ENCODE measurements at regions of chr1 and their contacts with region 1.

Region 1: GRCh38 chr1:157156058-157156541 is 17.9 kb upstream of the ETV3 start:
- DNase-seq: peak; percentile 81
- ATAC-seq: peak; percentile 86
- H3K4me3 Mint-ChIP-seq: no peak overlapping the region
- H3K27ac Mint-ChIP-seq: peak overlapping the region; percentile 33
- H3K4me1 Mint-ChIP-seq: peaks cover 23% of the 10 kb centered on the region
- H3K27me3 Mint-ChIP-seq: peaks cover 23% of the 10 kb centered on the region

Region 2: DNA sequence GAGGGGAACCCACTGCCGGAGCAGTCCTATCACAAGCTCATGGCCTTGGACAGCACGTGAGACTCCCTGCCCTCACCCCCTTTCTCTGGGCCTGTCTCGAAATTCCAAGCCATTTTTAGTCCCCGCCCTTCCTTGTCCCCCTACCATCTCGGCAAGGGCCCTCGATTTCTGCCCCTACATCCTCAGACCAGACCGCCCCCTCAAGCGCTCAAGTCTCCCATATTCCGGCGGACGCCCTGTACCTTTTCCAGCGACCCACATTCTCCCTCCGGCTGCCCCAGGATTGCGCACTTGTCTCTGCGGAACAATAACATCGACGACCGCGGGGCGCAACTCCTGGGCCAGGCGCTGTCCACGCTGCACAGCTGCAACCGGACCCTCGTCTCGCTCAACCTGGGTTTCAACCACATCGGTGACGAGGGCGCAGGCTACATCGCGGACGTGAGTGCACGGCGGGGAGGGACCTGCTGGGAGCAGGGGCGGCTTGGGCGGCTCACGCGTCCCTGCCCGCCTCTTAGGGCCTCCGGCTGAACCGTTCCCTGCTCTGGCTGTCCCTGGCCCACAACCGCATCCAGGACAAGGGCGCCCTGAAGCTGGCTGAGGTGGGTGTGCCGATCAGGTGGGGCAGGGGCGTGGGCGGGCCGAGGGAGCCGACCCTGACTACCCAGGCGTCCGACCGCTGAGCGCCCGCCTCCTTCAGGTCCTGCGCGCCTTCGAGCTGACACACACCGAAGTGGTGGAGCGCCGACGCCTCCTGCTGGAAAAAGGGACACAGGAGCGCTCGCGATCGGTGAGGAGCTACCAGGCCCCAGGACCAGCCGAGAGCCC is 228.7 kb before region 1 on chr1:
- CTCF ChIA-PET with region 1: no interaction called
- DNase-seq: peak; percentile 75
- ATAC-seq: peak; percentile 79
- H3K4me3 Mint-ChIP-seq: no peak overlapping the region
- H3K27ac Mint-ChIP-seq: no peak overlapping the region
- H3K4me1 Mint-ChIP-seq: peaks cover 33% of the 10 kb centered on the region
- H3K27me3 Mint-ChIP-seq: peaks cover 95% of the 10 kb centered on the region

Region 3: DNA sequence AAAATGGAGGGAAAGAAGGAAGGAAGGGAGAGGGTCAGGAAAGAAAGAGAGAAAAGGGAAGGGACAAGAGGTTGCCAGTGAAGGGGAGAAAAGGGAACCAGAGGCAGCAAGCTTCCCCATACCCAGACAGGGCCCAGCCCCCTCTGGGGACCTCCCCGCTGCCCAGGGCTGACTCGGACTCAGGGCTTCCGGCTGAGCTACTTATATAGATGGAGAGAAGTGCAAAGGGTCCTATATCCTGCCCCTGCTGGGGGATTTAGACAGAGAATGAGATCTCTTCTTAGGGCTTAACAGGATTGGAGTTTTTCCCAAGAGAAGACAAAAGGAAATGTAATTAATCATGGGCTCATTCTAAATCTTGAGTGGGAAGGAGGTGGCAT is 56.5 kb before region 1 on chr1 and contains the start of gene ETV3L:
- CTCF ChIA-PET with region 1: interaction called, 19 read pairs
- DNase-seq: no peak
- ATAC-seq: no peak
- H3K4me3 Mint-ChIP-seq: no peak within 1 kb of the TSS
- H3K27ac Mint-ChIP-seq: no peak within 1 kb of the TSS
- H3K4me1 Mint-ChIP-seq: peaks cover 5% of the 10 kb centered on the region
- H3K27me3 Mint-ChIP-seq: peaks cover 17% of the 10 kb centered on the region
- total RNA-seq, gene ETV3L: not detected

Region 4: GRCh38 chr1:157105988-157106812 is 49.9 kb before region 1 on chr1:
- CTCF ChIA-PET with region 1: interaction called, 14 read pairs
- DNase-seq: peak; percentile 73
- ATAC-seq: peak; percentile 89
- H3K4me3 Mint-ChIP-seq: no peak overlapping the region
- H3K27ac Mint-ChIP-seq: no peak overlapping the region
- H3K4me1 Mint-ChIP-seq: peaks cover 12% of the 10 kb centered on the region
- H3K27me3 Mint-ChIP-seq: peaks cover 53% of the 10 kb centered on the region

Region 5: DNA sequence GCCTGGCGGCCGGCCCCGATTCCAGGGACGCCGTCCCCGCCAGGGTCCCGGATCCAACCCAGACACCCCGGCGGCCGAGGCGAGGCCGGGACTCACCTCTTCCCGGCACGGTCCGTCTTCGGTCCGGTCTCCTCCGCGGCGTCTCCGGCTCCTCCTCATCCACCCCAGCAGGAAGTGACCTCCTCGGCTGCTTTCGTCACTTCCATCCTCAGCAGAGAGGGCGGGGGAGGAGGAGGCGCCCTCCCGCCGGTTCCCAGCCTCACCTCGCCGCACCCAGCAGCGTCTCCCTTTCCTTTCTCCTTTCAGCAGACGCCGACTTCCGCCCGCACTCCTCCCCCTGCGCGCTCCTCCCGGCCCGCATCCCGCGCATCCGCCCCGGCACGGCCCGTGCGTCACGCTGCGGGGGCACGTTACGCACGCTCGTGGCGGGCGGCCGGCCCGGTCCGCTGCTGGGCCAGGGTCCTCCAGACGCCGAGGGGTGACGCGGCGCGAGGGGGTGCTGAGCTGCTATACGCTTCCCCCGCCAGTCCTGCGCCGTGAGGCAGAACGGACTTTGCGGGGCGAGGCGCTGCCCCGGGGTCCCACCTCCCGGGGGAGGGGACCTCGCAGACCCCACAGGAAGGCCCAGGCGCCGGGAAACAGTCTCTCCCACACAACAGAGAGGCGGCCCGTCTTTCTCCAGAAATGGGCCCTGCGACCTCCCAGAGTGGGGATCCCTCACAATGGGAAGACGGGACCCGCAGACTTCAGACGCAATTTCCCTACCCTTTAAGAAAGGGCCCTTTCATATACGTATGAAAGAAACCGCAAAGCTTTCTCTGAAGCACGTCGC is 17.7 kb before region 1 on chr1 and contains the start of gene ETV3:
- CTCF ChIA-PET with region 1: interaction called, 118 read pairs
- DNase-seq: peak; percentile 95
- ATAC-seq: peak; percentile 92
- H3K4me3 Mint-ChIP-seq: peak within 1 kb of the TSS; percentile 97
- H3K27ac Mint-ChIP-seq: peak within 1 kb of the TSS; percentile 86
- H3K4me1 Mint-ChIP-seq: peaks cover 64% of the 10 kb centered on the region
- H3K27me3 Mint-ChIP-seq: no peaks in the 10 kb centered on the region
- total RNA-seq, gene ETV3: 27.8 to 32.8 TPM

Region 6: GRCh38 chr1:157359309-157360022 is 203.4 kb after region 1 on chr1:
- CTCF ChIA-PET with region 1: no interaction called
- DNase-seq: no peak
- ATAC-seq: no peak
- H3K4me3 Mint-ChIP-seq: no peak overlapping the region
- H3K27ac Mint-ChIP-seq: no peak overlapping the region
- H3K4me1 Mint-ChIP-seq: no peaks in the 10 kb centered on the region
- H3K27me3 Mint-ChIP-seq: peaks cover 23% of the 10 kb centered on the region

Measured in activated CD8-positive, alpha-beta memory T cell treated with anti-CD3 and anti-CD28 coated beads, Interleukin-2, amount 10 ng/mL, durations not matched to agents 7 days and 5 days (primary cell).